BJ (cell line): ENCODE measurements at regions of chr1 and their contacts with region 1.

Region 1: DNA sequence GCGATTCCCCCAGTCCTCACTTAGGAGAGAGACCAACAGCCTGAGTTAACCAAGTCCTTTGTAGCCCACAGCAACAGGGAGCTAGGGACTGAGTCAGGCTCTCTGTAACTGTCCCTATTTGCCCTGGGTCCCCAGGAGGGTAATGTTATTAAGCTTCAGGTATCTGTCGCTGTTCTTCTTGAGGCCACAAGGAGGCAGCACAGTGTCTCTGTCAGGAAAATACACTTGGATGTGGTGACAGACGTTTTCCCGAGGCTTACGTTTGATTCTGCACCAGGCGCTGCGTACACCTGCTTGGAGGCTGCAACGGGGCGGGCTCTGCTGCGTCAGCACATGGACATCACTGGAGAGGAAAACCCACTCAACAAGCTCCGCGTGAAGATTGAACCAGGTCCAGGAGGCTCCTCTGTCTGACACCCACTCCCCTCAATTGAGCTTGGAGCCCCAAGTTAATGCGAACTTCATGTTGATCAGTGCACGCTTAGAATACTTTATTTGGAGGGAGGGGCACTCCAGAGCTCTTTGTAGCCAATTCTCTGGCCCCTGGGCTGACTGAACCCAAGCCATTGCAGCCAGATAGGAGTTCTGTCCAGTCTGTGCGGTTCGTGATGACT is 10.7 kb upstream of the ELF3 start:
- DNase-seq: no peak
- H3K4me3 ChIP-seq: no peak overlapping the region
- H3K27me3 ChIP-seq: no peaks in the 10 kb centered on the region
- CTCF ChIP-seq: peak; percentile 76

Region 2: DNA sequence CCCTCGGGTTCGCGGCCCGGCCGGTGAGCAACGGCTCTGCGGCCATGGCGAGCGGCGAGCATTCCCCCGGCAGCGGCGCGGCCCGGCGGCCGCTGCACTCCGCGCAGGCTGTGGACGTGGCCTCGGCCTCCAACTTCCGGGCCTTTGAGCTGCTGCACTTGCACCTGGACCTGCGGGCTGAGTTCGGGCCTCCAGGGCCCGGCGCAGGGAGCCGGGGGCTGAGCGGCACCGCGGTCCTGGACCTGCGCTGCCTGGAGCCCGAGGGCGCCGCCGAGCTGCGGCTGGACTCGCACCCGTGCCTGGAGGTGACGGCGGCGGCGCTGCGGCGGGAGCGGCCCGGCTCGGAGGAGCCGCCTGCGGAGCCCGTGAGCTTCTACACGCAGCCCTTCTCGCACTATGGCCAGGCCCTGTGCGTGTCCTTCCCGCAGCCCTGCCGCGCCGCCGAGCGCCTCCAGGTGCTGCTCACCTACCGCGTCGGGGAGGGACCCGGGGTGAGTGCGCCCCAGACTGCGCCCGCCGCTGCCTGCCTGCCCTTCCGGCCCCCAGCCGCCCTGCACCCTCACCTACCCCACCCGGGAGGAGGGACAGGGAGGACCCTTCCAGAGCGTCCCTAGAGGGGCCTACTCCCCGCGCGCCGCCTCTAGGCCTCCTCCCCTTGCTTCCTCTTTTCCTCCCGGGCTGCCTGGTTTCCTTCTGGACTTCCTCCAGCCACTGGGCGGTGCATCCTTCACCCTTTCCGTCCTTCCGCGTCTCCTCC is 16.9 kb before region 1 on chr1 and contains the start of gene RNPEP:
- CTCF ChIA-PET with region 1: interaction called, 15 read pairs
- POLR2A ChIA-PET with region 1: no interaction called
- DNase-seq: no peak
- H3K4me3 ChIP-seq: peak within 1 kb of the TSS; percentile 81
- H3K27me3 ChIP-seq: no peaks in the 10 kb centered on the region
- CTCF ChIP-seq: no peak
- polyA plus RNA-seq, gene RNPEP: 42.6 and 51.5 TPM in 2 replicates

Region 3: GRCh38 chr1:201989354-201990128 is 10.2 kb before region 1 on chr1:
- CTCF ChIA-PET with region 1: interaction called, 15 read pairs
- POLR2A ChIA-PET with region 1: no interaction called
- DNase-seq: no peak
- H3K4me3 ChIP-seq: no peak overlapping the region
- H3K27me3 ChIP-seq: no peaks in the 10 kb centered on the region
- CTCF ChIP-seq: no peak